Lower leg skin (tissue), 4 donors: ENCODE measurements at regions of chr21 and their contacts with region 1.

Region 1: DNA sequence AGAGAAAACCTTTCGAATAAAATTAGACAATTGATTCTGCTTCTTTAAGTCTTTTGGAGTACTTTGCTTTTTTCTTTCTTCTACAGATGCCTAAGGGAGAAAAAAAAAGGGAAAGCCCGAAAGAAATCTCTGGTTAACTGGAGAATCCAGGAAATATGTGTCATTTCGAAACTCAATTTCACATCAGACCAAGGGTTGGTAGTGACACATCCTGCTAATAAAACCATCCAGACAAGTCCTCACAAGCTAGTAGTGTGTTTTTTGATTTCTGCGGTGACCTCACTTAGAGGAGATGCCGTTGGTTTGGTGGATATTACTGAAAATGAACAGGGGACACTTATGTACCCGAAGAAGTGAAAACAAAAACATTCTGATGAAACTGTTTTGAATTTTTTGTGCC is 726.5 kb upstream of the ADAMTS5 start:
- DNase-seq: no peak
- H3K4me3 ChIP-seq: no peak overlapping the region
- CTCF ChIP-seq: no peak
- POLR2A ChIP-seq: no peak

Region 2: GRCh38 chr21:26769613-26770188 is 923.7 kb before region 1 on chr21:
- intact Hi-C with region 1: loop called (anchors 5 kb)
- DNase-seq: no peak
- H3K4me3 ChIP-seq: no peak overlapping the region
- CTCF ChIP-seq: no peak
- POLR2A ChIP-seq: no peak

Region 3: GRCh38 chr21:26850108-26850643 is 843.2 kb before region 1 on chr21:
- intact Hi-C with region 1: loop called (anchors 5 kb)
- DNase-seq: no peak
- H3K4me3 ChIP-seq: no peak overlapping the region
- CTCF ChIP-seq: peak in 1 of 3 donors; percentile 76
- POLR2A ChIP-seq: no peak

Region 4: GRCh38 chr21:27734146-27734545 is 40.8 kb after region 1 on chr21:
- intact Hi-C with region 1: no loop called
- DNase-seq: no peak
- H3K4me3 ChIP-seq: no peak overlapping the region
- CTCF ChIP-seq: no peak
- POLR2A ChIP-seq: no peak

Region 5: GRCh38 chr21:28745131-28746016 is 1052.0 kb after region 1 on chr21:
- intact Hi-C with region 1: loop called (anchors 5 kb)
- DNase-seq: peak; percentile 72 to 92
- H3K4me3 ChIP-seq: no peak overlapping the region
- CTCF ChIP-seq: peak in 2 of 3 donors; percentile 50 to 90
- POLR2A ChIP-seq: no peak